ENCODE measurements at regions of chr11 and their contacts with region 1.

Region 1: DNA sequence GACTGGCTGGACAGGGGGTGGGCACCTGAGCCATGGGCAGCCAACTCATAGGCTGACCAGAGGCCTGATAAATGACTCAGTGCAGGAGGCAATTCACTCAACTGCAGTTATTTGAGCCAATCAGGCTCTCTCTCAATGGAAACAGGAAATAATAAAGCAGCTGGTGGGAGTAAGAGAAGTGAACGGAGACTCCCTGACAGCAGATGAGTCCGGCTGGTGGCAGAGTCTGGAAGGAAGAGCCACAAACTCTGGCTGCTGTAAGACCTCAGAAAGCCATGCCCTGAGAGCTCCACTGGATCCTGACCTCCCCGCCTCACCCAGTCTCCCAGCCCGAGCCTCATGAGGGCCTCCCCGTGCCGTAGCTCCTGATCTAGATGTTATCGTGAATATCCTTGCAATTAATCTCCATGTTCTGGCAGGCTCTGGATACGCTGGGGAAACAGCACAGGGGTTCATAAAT is 69.8 kb downstream of the TRIM29 start:
- DNase-seq: no peak
- ATAC-seq: peak; percentile 69
- H3K4me3 ChIP-seq: no peak overlapping the region
- H3K27ac ChIP-seq: no peak overlapping the region
- H3K4me1 ChIP-seq: peaks cover 7% of the 10 kb centered on the region
- H3K27me3 ChIP-seq: no peaks in the 10 kb centered on the region; a peak in 1 of 4 replicates
- CTCF ChIP-seq: no peak
- EP300 ChIP-seq: no peak
- POLR2A ChIP-seq: no peak
- RAD21 ChIP-seq: no peak

Region 2: DNA sequence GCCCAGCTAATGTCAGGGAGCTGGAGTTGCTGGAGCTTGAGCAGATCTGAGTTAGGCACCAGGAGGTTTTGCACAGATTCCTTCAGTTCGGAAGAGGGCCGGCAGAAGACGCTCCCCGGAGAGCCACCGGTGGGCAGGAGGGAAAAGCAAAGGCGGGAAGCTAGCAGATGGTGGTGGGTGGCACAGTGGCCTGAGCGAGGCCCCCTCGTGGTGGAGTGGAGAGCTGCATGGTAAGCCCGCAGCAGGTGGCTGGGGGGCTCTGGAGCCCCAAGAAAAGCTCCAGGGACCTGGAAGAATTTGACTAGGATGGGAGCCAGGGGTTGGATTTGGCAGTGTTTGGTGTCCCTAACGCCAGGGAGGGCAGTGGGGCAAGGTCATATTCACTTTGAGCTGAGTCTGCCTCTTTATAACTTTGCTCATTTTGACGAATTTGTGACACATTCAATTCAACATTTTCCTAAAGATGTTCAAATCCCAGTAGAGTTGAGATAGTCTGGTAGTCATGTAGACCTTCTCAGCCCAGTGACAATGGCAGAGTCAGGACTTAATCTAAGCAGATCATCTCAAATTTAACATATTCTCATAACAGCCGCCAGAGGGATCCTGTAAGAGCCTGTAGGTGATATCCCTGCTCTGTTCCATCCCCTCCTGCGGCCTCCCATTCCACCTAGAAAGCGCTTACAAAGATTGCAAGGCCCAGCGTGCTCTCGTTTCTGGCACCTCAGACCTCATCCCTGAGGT is 11.8 kb after region 1 on chr11:
- CTCF ChIA-PET with region 1: interaction called, 11 read pairs
- POLR2A ChIA-PET with region 1: no interaction called
- RAD21 ChIA-PET with region 1: no interaction called
- SMC1A ChIA-PET with region 1: interaction called, 3 read pairs
- in situ Hi-C with region 1: no loop called
- intact Hi-C with region 1: no loop called
- DNase-seq: no peak
- ATAC-seq: no peak
- H3K4me3 ChIP-seq: no peak overlapping the region
- H3K27ac ChIP-seq: no peak overlapping the region
- H3K4me1 ChIP-seq: no peaks in the 10 kb centered on the region
- H3K27me3 ChIP-seq: no peaks in the 10 kb centered on the region
- CTCF ChIP-seq: peak; percentile 8 to 41 (median 13); a peak in 2 of 6 replicates
- EP300 ChIP-seq: no peak
- POLR2A ChIP-seq: no peak
- RAD21 ChIP-seq: no peak

Region 3: DNA sequence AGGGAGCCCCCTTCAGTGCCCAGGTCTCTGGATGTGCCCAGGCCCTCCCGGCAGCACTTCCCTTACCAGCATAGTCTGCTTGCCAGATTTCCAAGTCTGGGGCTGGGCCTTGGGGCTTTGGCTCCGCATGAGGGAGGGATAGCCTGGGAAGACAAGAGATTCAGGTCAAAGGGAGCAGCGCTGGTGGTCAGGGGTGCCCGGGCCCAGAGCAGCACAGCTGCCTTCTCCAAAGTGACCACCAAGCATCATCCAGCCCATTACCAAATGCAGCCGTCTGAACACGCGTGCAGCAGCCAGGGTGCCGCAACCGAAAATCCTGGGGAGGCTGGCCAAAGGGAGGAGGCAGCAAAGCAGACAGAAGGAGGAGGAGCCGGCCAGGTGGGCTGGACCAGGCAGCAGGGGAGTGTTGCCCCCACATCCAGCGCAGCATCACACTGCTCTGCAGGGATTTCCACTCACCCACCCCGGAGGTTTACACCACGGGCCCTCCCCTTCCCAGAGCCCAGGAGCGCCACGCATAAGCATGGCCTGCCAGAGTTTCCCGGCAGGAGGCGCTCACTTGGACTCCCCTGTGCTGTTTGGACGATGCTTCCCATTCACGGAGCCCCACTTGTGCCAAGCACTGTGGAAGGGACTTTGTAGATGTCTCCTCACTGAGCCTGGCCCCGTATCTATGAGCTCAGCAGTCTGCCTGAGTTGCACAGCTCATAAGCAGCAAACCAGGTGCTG is 47.3 kb after region 1 on chr11:
- CTCF ChIA-PET with region 1: no interaction called
- POLR2A ChIA-PET with region 1: no interaction called
- RAD21 ChIA-PET with region 1: no interaction called
- SMC1A ChIA-PET with region 1: no interaction called
- in situ Hi-C with region 1: no loop called
- intact Hi-C with region 1: no loop called
- DNase-seq: no peak
- ATAC-seq: no peak
- H3K4me3 ChIP-seq: no peak overlapping the region
- H3K27ac ChIP-seq: no peak overlapping the region
- H3K4me1 ChIP-seq: no peaks in the 10 kb centered on the region
- H3K27me3 ChIP-seq: peaks cover 5 to 9% of the 10 kb centered on the region in 2 experiments
- CTCF ChIP-seq: no peak
- EP300 ChIP-seq: no peak
- POLR2A ChIP-seq: no peak
- RAD21 ChIP-seq: no peak

Measured in GM12878 (cell line).